Endothelial cell of umbilical vein (primary cell): ENCODE measurements at regions of chr1 and their contacts with region 1.

Region 1: GRCh38 chr1:159798893-159799292 is 3.3 kb upstream of the FCRL6 start:
- DNase-seq: peak; percentile 85
- H3K4me3 ChIP-seq: no peak overlapping the region
- H3K27ac ChIP-seq: no peak overlapping the region
- H3K4me1 ChIP-seq: no peaks in the 10 kb centered on the region
- H3K27me3 ChIP-seq: no peaks in the 10 kb centered on the region
- CTCF ChIP-seq: peak; percentile 75 to 77
- POLR2A ChIP-seq: no peak

Region 2: GRCh38 chr1:159161001-159161718 is 637.7 kb before region 1 on chr1:
- CTCF ChIA-PET with region 1: interaction called, 53 read pairs
- POLR2A ChIA-PET with region 1: no interaction called
- dilution Hi-C with region 1: no loop called
- intact Hi-C with region 1: loop called (anchors 1 kb)
- DNase-seq: peak; percentile 86
- H3K4me3 ChIP-seq: no peak overlapping the region
- H3K27ac ChIP-seq: no peak overlapping the region
- H3K4me1 ChIP-seq: peaks cover 7% of the 10 kb centered on the region
- H3K27me3 ChIP-seq: peaks cover 5 to 10% of the 10 kb centered on the region in 2 experiments
- CTCF ChIP-seq: peak; percentile 96 to 99
- POLR2A ChIP-seq: peak; percentile 25

Region 3: DNA sequence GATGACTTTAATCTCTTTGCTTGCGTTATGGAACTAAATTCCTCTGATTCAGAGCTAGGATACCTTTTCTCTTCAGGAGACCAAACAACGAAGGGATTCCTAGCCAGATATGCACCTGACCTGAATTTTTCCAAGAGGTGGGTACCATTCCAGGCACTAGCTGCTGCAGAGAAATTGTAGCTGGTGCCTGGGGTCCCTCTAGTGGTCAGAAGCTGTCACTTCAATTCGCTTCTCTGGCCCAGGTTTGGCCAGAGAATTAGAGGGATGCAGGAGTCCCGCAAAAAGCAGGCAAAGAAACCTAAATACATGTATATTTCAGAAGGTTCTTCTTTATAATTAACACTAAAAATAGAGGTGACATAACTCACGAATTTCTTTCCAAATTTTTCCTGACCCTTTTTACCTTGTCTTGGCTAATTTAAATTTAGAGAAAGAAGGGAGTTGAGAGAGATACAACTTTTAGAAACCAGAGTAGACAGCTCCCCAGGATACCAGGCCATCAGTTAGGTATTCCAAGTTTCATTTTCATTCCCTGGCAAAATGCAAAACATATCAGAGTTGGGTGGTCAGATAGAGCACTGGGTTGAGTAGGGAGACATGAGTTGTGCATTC is 584.6 kb before region 1 on chr1:
- CTCF ChIA-PET with region 1: interaction called, 23 read pairs
- POLR2A ChIA-PET with region 1: no interaction called
- dilution Hi-C with region 1: no loop called
- intact Hi-C with region 1: no loop called
- DNase-seq: peak; percentile 49
- H3K4me3 ChIP-seq: no peak overlapping the region
- H3K27ac ChIP-seq: no peak overlapping the region
- H3K4me1 ChIP-seq: peaks cover 12% of the 10 kb centered on the region
- H3K27me3 ChIP-seq: no peaks in the 10 kb centered on the region
- CTCF ChIP-seq: peak; percentile 84 to 85
- POLR2A ChIP-seq: no peak

Region 4: GRCh38 chr1:159632922-159633321 is 166.0 kb before region 1 on chr1:
- CTCF ChIA-PET with region 1: no interaction called
- POLR2A ChIA-PET with region 1: no interaction called
- dilution Hi-C with region 1: no loop called
- intact Hi-C with region 1: no loop called
- DNase-seq: no peak
- H3K4me3 ChIP-seq: no peak overlapping the region
- H3K27ac ChIP-seq: no peak overlapping the region
- H3K4me1 ChIP-seq: no peaks in the 10 kb centered on the region
- H3K27me3 ChIP-seq: no peaks in the 10 kb centered on the region
- CTCF ChIP-seq: no peak
- POLR2A ChIP-seq: no peak

Region 5: GRCh38 chr1:159829273-159829634 is 30.4 kb after region 1 on chr1:
- CTCF ChIA-PET with region 1: interaction called, 71 read pairs
- POLR2A ChIA-PET with region 1: no interaction called
- dilution Hi-C with region 1: no loop called
- intact Hi-C with region 1: loop called (anchors 1 kb)
- DNase-seq: peak; percentile 20
- H3K4me3 ChIP-seq: no peak overlapping the region
- H3K27ac ChIP-seq: no peak overlapping the region
- H3K4me1 ChIP-seq: no peaks in the 10 kb centered on the region
- H3K27me3 ChIP-seq: peaks cover 0 to 2% of the 10 kb centered on the region in 2 experiments
- CTCF ChIP-seq: peak; percentile 43 to 57
- POLR2A ChIP-seq: no peak

Region 6: GRCh38 chr1:159869173-159869572 is 70.3 kb after region 1 on chr1:
- CTCF ChIA-PET with region 1: interaction called, 14 read pairs
- POLR2A ChIA-PET with region 1: no interaction called
- dilution Hi-C with region 1: no loop called
- intact Hi-C with region 1: no loop called
- DNase-seq: no peak
- H3K4me3 ChIP-seq: no peak overlapping the region
- H3K27ac ChIP-seq: no peak overlapping the region
- H3K4me1 ChIP-seq: no peaks in the 10 kb centered on the region
- H3K27me3 ChIP-seq: no peaks in the 10 kb centered on the region
- CTCF ChIP-seq: no peak
- POLR2A ChIP-seq: no peak

Region 7: DNA sequence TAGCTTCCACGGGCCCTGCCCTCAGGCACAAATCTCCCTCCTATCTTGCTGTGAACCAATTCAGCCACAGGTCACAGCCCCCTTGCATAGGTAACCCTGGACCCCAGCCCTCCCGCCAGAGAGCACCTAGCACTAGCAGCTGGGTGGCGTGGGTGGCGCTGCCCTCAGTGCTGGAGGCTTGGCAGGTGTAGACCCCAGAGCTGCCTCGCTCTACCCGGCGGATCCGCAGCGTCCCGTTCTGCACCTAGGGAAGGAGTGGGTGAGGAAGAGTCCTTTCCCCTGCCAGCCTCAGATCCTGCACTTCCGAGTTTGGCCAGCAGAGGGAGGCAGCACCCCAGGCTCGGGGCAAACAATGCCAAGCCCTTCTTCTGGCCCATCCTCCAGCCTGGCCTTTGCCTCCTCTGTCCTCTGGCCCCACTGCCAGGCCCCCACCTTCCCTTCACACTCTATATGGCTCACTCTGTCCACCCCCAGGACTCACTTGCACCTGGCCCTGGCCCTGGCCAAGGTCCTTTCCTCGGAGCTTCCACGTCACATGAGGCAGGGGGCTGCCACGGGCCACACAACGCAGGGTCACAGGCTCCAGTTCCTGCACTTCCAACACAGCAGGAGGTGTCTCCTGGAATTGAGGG is 137.5 kb after region 1 on chr1:
- CTCF ChIA-PET with region 1: interaction called, 7 read pairs
- POLR2A ChIA-PET with region 1: no interaction called
- dilution Hi-C with region 1: no loop called
- intact Hi-C with region 1: loop called (anchors 1 kb)
- DNase-seq: peak; percentile 47
- H3K4me3 ChIP-seq: no peak overlapping the region
- H3K27ac ChIP-seq: no peak overlapping the region
- H3K4me1 ChIP-seq: no peaks in the 10 kb centered on the region
- H3K27me3 ChIP-seq: peaks cover 0 to 14% of the 10 kb centered on the region in 2 experiments
- CTCF ChIP-seq: peak; percentile 86 to 98
- POLR2A ChIP-seq: no peak

Region 8: DNA sequence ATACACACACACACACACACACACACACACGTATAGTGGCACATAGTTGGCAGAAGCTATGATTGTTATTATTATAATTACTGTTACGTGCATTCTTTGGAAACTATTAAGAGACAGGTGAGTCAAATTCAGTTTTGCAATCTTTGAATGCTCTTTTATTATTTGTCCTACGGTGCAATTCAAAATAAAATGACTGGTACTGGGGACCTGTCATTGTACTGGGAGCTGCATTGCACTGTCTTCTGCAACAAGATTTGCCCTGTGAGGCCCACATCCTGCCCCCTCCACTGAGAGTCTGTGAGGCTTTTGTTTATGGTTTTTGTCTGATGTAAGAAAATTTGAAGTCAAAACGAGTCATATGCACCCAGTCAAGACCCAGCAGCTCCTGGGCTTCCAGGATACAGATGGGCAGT is 999.0 kb after region 1 on chr1:
- CTCF ChIA-PET with region 1: no interaction called
- POLR2A ChIA-PET with region 1: no interaction called
- dilution Hi-C with region 1: no loop called
- intact Hi-C with region 1: no loop called
- DNase-seq: no peak
- H3K4me3 ChIP-seq: no peak overlapping the region
- H3K27ac ChIP-seq: no peak overlapping the region
- H3K4me1 ChIP-seq: no peaks in the 10 kb centered on the region
- H3K27me3 ChIP-seq: no peaks in the 10 kb centered on the region
- CTCF ChIP-seq: no peak
- POLR2A ChIP-seq: no peak